Natural killer cell (primary cell): ENCODE measurements at regions of chr16 and their contacts with region 1.

Region 1: GRCh38 chr16:87778830-87779579 is 13.2 kb upstream of the KLHDC4 start:
- DNase-seq: peak; percentile 92 to 96
- ATAC-seq: peak; percentile 90 to 97 (median 91)
- H3K4me3 ChIP-seq: no peak overlapping the region
- H3K4me3 Mint-ChIP-seq: peak overlapping the region; percentile 75
- H3K27ac ChIP-seq: peak overlapping the region; percentile 7
- H3K27ac Mint-ChIP-seq: peak overlapping the region; percentile 85 to 90
- H3K4me1 ChIP-seq: peaks cover 44% of the 10 kb centered on the region
- H3K4me1 Mint-ChIP-seq: peaks cover 20 to 29% of the 10 kb centered on the region in 2 donors
- H3K27me3 ChIP-seq: no peaks in the 10 kb centered on the region
- H3K27me3 Mint-ChIP-seq: no peaks in the 10 kb centered on the region
- CTCF ChIP-seq: peak; percentile 90

Region 2: DNA sequence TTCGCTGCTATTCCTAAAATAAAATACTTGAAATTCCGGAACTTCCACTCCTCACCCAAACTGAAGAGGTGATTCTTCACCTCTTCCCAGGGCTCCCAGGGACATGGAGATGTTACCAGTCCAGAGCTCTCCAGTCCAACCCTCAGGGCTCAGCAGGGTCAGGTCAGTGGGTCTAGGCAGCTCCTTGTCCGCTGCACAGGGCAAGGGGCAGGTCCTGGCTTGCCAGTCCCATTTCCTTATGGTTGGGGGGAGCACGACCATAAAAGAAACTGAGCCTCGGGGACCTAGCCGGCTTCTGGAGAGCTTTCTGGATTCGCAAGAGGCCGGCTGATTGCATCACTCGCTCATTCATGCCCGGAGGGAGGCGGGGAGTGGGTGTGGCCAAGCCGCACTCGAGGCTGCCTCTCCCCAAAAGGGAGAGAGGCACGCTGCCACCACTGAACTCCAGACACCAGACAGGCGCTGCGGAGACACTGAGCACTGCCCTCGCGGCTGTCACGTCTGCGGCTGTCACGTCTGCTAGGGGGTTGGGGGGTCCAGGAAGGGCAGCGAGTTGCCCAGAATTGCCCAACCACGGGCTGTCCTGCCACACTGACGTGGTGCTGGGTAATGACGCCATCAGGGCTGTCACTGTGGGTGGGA is 74.5 kb after region 1 on chr16:
- intact Hi-C with region 1: loop called (anchors 1 kb)
- DNase-seq: peak; percentile 91 to 93
- ATAC-seq: peak; percentile 78 to 89 (median 79)
- H3K4me3 ChIP-seq: peak overlapping the region; percentile 13
- H3K4me3 Mint-ChIP-seq: peak overlapping the region; percentile 70
- H3K27ac ChIP-seq: peak overlapping the region; percentile 78
- H3K27ac Mint-ChIP-seq: peak overlapping the region; percentile 86 to 94
- H3K4me1 ChIP-seq: peaks cover 60% of the 10 kb centered on the region
- H3K4me1 Mint-ChIP-seq: peaks cover 16 to 38% of the 10 kb centered on the region in 2 donors
- H3K27me3 ChIP-seq: no peaks in the 10 kb centered on the region
- H3K27me3 Mint-ChIP-seq: no peaks in the 10 kb centered on the region
- CTCF ChIP-seq: no peak

Region 3: DNA sequence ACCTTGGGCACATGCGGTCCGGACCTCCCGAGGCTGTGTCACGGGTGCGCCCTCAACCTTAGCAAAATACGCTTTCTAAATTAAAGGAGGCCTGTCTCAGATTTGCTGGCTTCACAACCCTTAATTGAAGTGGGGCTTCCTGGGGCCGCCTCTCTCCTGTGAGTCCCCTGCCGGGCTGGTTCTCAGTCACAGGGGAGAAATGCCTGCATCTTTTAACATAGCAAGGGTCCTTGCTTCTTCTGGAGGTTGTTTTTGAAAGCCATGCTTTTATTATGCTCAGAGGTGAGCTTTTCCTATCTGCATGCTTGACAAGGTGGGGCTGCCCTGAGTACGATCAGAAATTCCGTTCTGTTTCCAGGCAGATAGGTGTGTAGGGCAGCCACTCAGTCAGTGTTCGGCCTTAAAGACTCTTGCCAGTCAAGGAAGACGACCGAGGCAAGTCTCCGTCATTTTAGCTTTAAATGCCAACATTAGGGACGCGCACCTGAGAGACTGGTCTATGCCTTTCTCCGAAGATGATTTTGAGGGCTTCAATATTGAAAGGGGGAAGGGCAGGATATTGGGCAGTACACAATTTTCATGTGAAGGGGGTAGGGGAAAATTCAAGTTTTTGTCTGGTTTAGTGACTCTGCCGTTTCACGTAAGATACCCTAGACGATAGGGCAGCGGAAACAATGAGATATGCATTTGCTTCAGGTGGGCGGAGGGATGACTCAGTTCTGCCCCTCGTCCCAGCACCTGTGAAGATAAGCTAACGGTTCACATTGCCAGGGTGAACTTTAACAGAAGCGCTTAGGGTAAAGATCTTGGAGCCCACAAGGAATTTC is 95.8 kb after region 1 on chr16:
- intact Hi-C with region 1: loop called (anchors 1 kb)
- DNase-seq: peak in 1 of 2 donors; percentile 54
- ATAC-seq: no peak
- H3K4me3 ChIP-seq: no peak overlapping the region
- H3K4me3 Mint-ChIP-seq: no peak overlapping the region
- H3K27ac ChIP-seq: no peak overlapping the region
- H3K27ac Mint-ChIP-seq: no peak overlapping the region
- H3K4me1 ChIP-seq: peaks cover 5% of the 10 kb centered on the region
- H3K4me1 Mint-ChIP-seq: peaks cover 0 to 8% of the 10 kb centered on the region in 2 donors
- H3K27me3 ChIP-seq: no peaks in the 10 kb centered on the region
- H3K27me3 Mint-ChIP-seq: peaks cover 2 to 16% of the 10 kb centered on the region in 2 donors
- CTCF ChIP-seq: no peak

Region 4: GRCh38 chr16:88437373-88437964 is 658.5 kb after region 1 on chr16:
- intact Hi-C with region 1: loop called (anchors 5 kb)
- DNase-seq: peak; percentile 62 to 82
- ATAC-seq: peak; percentile 49 to 74 (median 74)
- H3K4me3 ChIP-seq: no peak overlapping the region
- H3K4me3 Mint-ChIP-seq: no peak overlapping the region
- H3K27ac ChIP-seq: no peak overlapping the region
- H3K27ac Mint-ChIP-seq: no peak overlapping the region
- H3K4me1 ChIP-seq: peaks cover 3% of the 10 kb centered on the region
- H3K4me1 Mint-ChIP-seq: peaks cover 0 to 13% of the 10 kb centered on the region in 2 donors
- H3K27me3 ChIP-seq: no peaks in the 10 kb centered on the region
- H3K27me3 Mint-ChIP-seq: no peaks in the 10 kb centered on the region
- CTCF ChIP-seq: peak; percentile 85